Activated T-helper 1 cell treated with anti-CD3 and anti-CD28 coated beads, Interleukin-12 subunit alpha, Interleukin-12 subunit beta, Interleukin-2, Interleukin-4 antibody, amounts not matched to agents 30 ng/mL and 10 ng/mL and 1 ng/mL, durations not matched to agents 14 hours and 24 hours and 36 hours (primary cell): ENCODE measurements at regions of chr10 and their contacts with region 1.

Region 1: GRCh38 chr10:92517034-92517655 is 56.7 kb downstream of the IDE start:
- DNase-seq: peak; percentile 48
- H3K4me3 Mint-ChIP-seq: no peak overlapping the region
- H3K27ac Mint-ChIP-seq: no peak overlapping the region
- H3K4me1 Mint-ChIP-seq: peaks cover 8% of the 10 kb centered on the region
- H3K27me3 Mint-ChIP-seq: no peaks in the 10 kb centered on the region

Region 2: GRCh38 chr10:91838199-91838598 is 678.9 kb before region 1 on chr10:
- intact Hi-C with region 1: no loop called
- DNase-seq: no peak
- H3K4me3 Mint-ChIP-seq: no peak overlapping the region
- H3K27ac Mint-ChIP-seq: no peak overlapping the region
- H3K4me1 Mint-ChIP-seq: no peaks in the 10 kb centered on the region
- H3K27me3 Mint-ChIP-seq: no peaks in the 10 kb centered on the region

Region 3: DNA sequence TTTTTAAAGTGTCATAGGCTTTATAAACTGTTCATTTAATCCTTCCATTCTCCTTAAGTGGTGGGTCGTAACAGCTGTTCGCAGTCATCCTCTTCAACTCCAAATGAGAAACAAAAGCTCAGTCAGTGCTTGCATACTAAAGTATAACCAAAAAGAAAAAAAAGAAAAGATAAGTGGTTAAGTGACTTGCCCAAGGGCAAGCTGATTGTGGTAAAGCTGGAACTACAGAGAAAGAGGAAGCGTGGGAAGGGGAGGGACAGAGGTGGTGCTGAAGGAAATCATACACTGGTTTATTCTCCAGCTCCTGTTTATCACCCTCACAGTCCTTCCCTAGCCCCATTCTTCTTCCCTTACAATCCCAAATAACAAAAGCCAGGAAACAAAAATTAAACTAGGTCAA is 27.2 kb after region 1 on chr10:
- intact Hi-C with region 1: loop called (anchors 2 kb)
- DNase-seq: peak; percentile 8
- H3K4me3 Mint-ChIP-seq: no peak overlapping the region
- H3K27ac Mint-ChIP-seq: peak overlapping the region; percentile 45
- H3K4me1 Mint-ChIP-seq: peaks cover 28% of the 10 kb centered on the region
- H3K27me3 Mint-ChIP-seq: no peaks in the 10 kb centered on the region

Region 4: GRCh38 chr10:92644921-92645320 is 127.8 kb after region 1 on chr10:
- intact Hi-C with region 1: loop called (anchors 1 kb)
- DNase-seq: no peak
- H3K4me3 Mint-ChIP-seq: no peak overlapping the region
- H3K27ac Mint-ChIP-seq: no peak overlapping the region
- H3K4me1 Mint-ChIP-seq: peaks cover 16% of the 10 kb centered on the region
- H3K27me3 Mint-ChIP-seq: no peaks in the 10 kb centered on the region

Region 5: GRCh38 chr10:92880233-92880861 is 363.2 kb after region 1 on chr10:
- intact Hi-C with region 1: loop called (anchors 5 kb)
- DNase-seq: no peak
- H3K4me3 Mint-ChIP-seq: no peak overlapping the region
- H3K27ac Mint-ChIP-seq: no peak overlapping the region
- H3K4me1 Mint-ChIP-seq: peaks cover 18% of the 10 kb centered on the region
- H3K27me3 Mint-ChIP-seq: peaks cover 3% of the 10 kb centered on the region